Activated CD4-positive, alpha-beta memory T cell treated with anti-CD3 and anti-CD28 coated beads, Interleukin-2, amount 10 ng/mL, durations not matched to agents 7 days and 5 days (primary cell): ENCODE measurements at regions of chr5 and their contacts with region 1.

Region 1: GRCh38 chr5:157761690-157762621 is 18.4 kb downstream of the LSM11 start:
- DNase-seq: no peak
- H3K4me3 Mint-ChIP-seq: no peak overlapping the region
- H3K27ac Mint-ChIP-seq: no peak overlapping the region
- H3K4me1 Mint-ChIP-seq: peaks cover 14% of the 10 kb centered on the region
- H3K27me3 Mint-ChIP-seq: no peaks in the 10 kb centered on the region

Region 2: DNA sequence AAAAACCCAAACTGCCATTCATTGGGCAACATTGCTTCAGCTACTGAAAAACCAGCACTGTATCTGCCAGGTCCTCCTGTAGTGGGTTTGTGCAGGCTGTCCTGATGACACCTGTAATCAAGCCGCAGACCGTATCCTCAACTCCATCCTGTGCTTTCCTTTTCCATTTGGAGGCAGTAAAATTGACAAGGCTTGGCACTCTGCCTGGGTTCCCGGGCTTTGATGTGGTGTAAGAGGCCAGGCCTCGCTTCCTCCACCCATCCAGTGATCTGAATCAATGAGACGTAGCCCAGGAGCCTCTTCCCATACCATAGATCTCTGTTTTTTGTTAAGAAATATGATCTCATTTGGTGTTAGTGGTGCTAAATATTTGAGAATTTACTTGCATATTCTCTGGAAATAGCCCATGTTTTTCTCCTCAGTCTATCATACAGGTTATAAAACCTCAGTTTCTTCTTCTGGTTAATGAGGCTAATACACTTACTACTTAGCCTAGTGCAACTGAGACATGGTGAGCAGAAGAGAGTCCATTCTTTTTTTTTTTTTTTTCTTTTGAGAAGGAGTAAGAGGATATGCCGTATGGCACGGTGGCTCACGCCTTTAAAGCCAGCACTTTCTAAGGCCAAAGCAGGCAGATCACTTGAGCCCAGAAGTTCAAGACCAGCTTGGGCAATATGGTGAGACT is 16.3 kb after region 1 on chr5:
- CTCF ChIA-PET with region 1: interaction called, 24 read pairs
- POLR2A ChIA-PET with region 1: no interaction called
- DNase-seq: no peak
- H3K4me3 Mint-ChIP-seq: no peak overlapping the region
- H3K27ac Mint-ChIP-seq: no peak overlapping the region
- H3K4me1 Mint-ChIP-seq: no peaks in the 10 kb centered on the region
- H3K27me3 Mint-ChIP-seq: peaks cover 3% of the 10 kb centered on the region

Region 3: DNA sequence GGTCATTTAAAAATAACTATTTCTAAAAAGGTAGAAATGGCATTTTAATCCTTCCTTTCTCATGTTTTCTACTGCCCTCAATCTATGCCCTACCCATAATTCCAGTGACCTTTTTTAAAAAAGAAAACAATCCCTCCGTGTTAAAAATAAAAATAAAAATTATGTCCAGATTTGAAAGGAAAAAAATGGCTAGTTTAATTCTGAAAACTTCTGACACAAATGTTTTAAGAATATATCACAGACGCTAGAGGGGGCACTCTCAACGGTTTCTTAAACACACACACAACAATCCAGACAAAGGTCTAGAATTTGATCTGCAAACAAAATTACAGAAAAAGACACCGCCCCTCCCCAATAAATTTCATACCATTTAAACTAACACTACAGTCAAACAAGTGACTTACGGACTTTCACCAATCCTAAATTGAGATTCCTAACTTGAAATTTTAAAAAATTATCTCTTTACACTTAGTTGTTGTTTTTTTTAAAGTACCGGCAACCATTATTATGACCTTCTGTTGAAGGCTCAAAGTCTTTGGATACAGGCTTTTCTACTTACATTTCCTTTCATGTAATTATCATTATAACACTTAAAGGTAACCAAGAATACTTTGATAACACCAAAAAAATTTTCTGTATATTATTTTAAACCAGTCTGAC is 58.8 kb after region 1 on chr5:
- CTCF ChIA-PET with region 1: no interaction called
- POLR2A ChIA-PET with region 1: no interaction called
- DNase-seq: no peak
- H3K4me3 Mint-ChIP-seq: no peak overlapping the region
- H3K27ac Mint-ChIP-seq: no peak overlapping the region
- H3K4me1 Mint-ChIP-seq: peaks cover 17% of the 10 kb centered on the region
- H3K27me3 Mint-ChIP-seq: no peaks in the 10 kb centered on the region